H1 (cell line): ENCODE measurements at regions of chr14 and their contacts with region 1.

Region 1: GRCh38 chr14:103808403-103809001 is 38.9 kb downstream of the PPP1R13B start:
- DNase-seq: peak; percentile 27 to 82
- H3K4me3 ChIP-seq: no peak overlapping the region
- H3K27ac ChIP-seq: no peak overlapping the region
- H3K4me1 ChIP-seq: no peaks in the 10 kb centered on the region
- H3K27me3 ChIP-seq: no peaks in the 10 kb centered on the region
- CTCF ChIP-seq: peak; percentile 74 to 88 (median 77)
- EP300 ChIP-seq: no peak
- POLR2A ChIP-seq: no peak
- RAD21 ChIP-seq: peak; percentile 94 to 95

Region 2: DNA sequence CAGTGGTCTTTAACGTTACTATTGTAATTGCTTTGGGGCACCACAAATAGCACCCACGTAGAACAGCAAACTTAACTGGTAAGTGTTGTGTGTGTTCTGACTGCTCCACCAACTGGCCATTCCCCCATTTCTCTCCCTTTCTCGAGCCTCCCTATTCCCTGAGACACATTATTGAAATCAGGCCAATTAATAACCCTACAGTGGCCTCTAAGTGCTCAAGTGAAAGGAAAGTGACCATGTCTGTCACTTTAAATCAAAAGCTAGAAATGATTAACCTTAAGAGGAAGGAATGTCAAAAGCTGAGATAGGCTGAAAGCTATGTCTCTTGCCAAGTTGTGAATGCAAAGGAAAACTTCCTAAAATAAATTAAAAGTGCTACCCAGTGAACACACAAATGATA is 16.6 kb after region 1 on chr14:
- CTCF ChIA-PET with region 1: interaction called, 19 read pairs
- POLR2A ChIA-PET with region 1: interaction called, 3 read pairs
- DNase-seq: no peak
- H3K4me3 ChIP-seq: no peak overlapping the region
- H3K27ac ChIP-seq: no peak overlapping the region
- H3K4me1 ChIP-seq: no peaks in the 10 kb centered on the region; a peak in 3 of 7 replicates
- H3K27me3 ChIP-seq: no peaks in the 10 kb centered on the region
- CTCF ChIP-seq: no peak
- EP300 ChIP-seq: no peak
- POLR2A ChIP-seq: no peak
- RAD21 ChIP-seq: no peak

Region 3: DNA sequence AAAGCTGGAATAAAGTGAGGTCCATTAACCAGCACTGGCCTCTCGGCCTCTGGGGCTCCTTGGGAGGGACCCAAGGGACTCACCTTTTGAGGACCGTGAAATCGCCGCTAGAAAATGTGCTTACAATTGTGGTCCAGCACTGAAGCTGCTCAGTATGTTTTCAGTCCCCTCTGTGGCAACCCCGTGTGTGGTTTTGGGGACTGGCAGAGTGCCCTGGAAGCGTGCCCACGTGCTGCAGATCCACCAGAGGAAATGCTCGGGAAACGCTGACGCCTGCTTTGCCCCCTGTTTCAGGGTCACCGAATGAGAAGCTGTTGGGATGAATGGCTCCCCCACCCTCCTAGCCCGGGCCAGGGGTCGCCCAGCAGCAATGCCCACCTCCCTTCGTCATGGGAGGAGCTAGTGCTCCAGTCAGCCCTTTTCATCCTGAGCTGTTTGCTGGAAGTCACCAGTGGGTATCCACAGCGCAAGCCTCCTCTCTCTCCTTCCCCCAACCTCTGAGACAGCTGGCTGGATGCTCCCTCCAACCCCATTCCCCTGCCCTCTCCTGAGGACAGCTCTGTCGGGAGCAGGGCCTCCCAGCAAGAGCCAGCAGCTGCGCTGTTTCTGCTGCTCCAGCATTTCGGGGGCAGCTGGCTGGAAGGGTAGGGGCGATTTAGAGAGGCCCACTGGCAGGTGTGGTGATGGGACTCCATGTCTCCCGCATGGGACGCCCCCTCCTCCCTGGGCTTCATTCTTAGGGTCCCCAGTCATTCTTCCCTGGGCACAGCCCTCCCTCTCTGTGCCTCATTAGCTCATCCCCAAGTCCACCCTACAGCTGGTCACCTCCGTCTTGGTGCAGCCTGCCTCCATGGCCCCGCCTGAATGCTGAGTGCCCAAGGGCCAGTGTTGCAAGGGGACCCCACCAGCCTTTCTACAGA is 72.1 kb after region 1 on chr14:
- CTCF ChIA-PET with region 1: interaction called, 16 read pairs
- POLR2A ChIA-PET with region 1: no interaction called
- DNase-seq: no peak
- H3K4me3 ChIP-seq: no peak overlapping the region
- H3K27ac ChIP-seq: no peak overlapping the region
- H3K4me1 ChIP-seq: peaks cover 11 to 18% (median 12%) of the 10 kb centered on the region in 4 experiments
- H3K27me3 ChIP-seq: no peaks in the 10 kb centered on the region
- CTCF ChIP-seq: no peak
- EP300 ChIP-seq: no peak
- POLR2A ChIP-seq: no peak
- RAD21 ChIP-seq: no peak

Region 4: GRCh38 chr14:103910262-103910935 is 101.9 kb after region 1 on chr14:
- CTCF ChIA-PET with region 1: interaction called, 180 read pairs
- POLR2A ChIA-PET with region 1: interaction called, 5 read pairs
- DNase-seq: peak; percentile 76 to 85
- H3K4me3 ChIP-seq: peak overlapping the region in 1 of 4 experiments; percentile 23; a peak in 2 of 8 replicates
- H3K27ac ChIP-seq: no peak overlapping the region
- H3K4me1 ChIP-seq: peaks cover 0 to 5% (median 3%) of the 10 kb centered on the region in 4 experiments; a peak in 5 of 7 replicates
- H3K27me3 ChIP-seq: no peaks in the 10 kb centered on the region
- CTCF ChIP-seq: peak; percentile 81 to 88 (median 87)
- EP300 ChIP-seq: no peak
- POLR2A ChIP-seq: 0 out of 3 replicates have a peak, but pooled peaks of 1 of the 2 experiments have one; percentile 42
- RAD21 ChIP-seq: peak; percentile 87 to 89

Region 5: DNA sequence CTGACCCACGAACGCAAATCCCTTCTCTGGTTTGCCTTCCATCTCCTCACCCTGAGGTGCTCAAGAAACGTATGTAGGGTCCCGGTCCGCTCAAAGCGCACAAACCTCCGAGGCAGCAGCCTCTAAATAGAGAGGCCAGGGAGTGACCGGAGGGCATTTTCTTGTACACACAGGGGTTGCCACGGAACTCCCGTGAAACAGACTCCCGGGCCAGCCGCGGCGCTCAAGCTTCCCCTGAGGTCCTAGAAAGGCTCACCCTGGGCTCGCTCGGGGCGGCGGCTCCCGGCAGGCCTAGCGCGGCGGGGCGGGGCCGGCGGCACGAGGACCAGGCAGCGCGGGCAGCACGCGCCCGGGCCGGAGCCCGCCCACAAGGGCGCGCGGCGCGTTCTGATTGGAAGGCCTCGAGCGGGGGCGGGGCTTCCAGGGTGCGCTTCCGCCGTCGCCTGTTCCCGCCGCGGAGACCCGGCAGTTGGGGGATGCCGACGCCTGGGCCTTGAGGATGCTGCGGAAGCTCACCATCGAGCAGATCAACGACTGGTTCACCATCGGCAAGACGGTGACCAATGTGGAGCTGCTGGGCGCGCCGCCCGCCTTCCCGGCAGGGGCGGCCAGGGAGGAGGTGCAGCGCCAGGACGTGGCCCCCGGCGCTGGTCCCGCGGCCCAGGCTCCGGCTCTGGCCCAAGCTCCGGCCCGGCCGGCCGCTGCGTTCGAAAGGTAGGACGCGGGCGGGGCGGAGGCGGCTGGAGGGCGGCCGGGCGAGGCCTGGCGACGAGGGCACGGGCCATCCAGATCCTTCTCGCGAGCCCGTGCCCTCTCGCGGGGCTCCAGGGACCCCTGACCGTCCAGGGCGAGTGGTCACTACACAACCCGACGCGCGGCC is 119.7 kb after region 1 on chr14 and contains the start of gene TDRD9:
- CTCF ChIA-PET with region 1: interaction called, 47 read pairs
- POLR2A ChIA-PET with region 1: no interaction called
- DNase-seq: no peak
- H3K4me3 ChIP-seq: no peak within 1 kb of the TSS
- H3K27ac ChIP-seq: no peak within 1 kb of the TSS
- H3K4me1 ChIP-seq: no peaks in the 10 kb centered on the region
- H3K27me3 ChIP-seq: no peaks in the 10 kb centered on the region
- CTCF ChIP-seq: no peak
- EP300 ChIP-seq: no peak
- POLR2A ChIP-seq: no peak
- RAD21 ChIP-seq: no peak
- total RNA-seq, gene TDRD9: not detected in 2 replicates